Head of caudate nucleus (tissue), 42 donors: ENCODE measurements at regions of chrX and their contacts with region 1.

Region 1: DNA sequence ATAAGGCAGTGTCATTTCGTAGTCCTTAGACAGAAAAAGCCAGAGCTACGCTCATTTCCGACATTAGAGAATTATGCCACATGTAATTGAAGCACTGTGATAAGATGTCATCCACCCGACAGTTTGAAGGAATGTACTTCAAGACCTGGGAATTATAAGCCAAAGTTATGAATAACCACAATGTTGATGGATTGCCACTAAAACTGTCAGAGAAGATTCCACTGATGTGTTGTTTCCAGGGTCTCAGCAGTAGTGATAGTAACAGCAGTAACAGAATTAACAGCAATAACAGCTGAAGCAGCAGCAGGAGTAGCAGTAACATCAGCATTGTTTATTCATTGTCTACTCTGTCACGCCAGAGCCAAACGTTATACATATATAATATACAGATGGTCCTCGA is 24.7 kb downstream of the RAB33A start:
- DNase-seq: no peak

Region 2: DNA sequence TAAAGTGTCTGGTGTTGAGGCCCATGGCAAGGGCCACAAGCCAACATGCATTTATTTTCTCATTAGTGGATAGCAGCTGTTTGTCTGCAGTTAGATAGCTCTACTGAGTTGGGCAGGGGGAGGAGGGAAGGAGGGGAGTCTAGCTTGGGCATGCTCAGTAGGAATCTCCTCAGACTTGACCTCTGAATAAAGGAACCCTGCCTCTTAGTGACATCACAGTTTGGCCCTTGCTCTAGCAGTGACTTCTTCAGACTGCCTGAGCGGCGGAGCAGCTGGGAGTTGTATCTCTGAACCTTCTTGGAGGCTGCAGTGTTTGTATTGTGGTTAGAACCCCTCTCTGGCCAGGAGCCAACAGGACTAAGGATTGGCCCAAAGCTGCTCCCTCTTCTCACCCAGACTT is 156.6 kb before region 1 on chrX:
- intact Hi-C with region 1: no loop called
- DNase-seq: no peak

Region 3: GRCh38 chrX:130071611-130072344 is 124.7 kb before region 1 on chrX:
- intact Hi-C with region 1: loop called (anchors 5 kb)
- DNase-seq: no peak